ENCODE measurements at regions of chr6 and their contacts with region 1.

Region 1: DNA sequence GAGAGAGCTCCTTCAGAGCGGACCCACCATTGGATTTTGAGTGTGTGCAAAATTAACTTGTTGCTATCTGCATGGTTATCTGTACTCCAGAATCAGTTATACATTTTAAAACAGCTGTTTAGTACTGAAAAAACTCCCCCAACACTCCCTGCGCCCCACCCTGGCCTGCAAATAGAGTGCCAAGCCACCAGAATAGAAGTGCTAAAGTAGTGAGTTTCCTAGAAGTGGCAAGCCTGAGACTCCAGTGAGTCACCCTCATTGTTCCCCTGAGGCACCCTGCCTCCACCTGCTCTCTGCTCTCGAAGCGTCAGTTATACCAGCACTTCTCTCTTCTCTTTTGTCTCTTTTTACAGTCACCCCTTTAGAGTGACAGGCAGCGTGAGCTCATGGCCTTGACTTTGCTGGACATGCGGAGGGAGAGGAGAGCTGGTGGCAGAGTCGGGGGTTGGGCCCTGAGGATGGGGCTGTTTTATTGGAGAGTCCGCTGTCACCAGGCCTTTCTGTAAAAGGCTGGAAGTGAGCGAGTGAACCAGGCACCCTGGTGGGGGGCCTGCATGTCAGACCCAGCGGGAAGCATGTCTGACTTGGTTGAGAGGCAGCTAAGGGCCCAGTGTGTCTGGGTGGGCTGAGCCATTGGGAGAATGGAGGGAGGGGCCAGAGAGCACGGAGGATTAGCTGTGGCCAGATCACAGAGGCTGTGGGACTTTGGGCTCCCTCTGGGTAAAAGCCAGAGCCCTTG is 10.4 kb downstream of the IGF2R start:
- DNase-seq: peak; percentile 58
- H3K4me3 Mint-ChIP-seq: peak overlapping the region; percentile 86
- H3K27ac Mint-ChIP-seq: peak overlapping the region; percentile 97
- H3K4me1 Mint-ChIP-seq: peaks cover 89% of the 10 kb centered on the region
- H3K27me3 Mint-ChIP-seq: no peaks in the 10 kb centered on the region

Region 2: DNA sequence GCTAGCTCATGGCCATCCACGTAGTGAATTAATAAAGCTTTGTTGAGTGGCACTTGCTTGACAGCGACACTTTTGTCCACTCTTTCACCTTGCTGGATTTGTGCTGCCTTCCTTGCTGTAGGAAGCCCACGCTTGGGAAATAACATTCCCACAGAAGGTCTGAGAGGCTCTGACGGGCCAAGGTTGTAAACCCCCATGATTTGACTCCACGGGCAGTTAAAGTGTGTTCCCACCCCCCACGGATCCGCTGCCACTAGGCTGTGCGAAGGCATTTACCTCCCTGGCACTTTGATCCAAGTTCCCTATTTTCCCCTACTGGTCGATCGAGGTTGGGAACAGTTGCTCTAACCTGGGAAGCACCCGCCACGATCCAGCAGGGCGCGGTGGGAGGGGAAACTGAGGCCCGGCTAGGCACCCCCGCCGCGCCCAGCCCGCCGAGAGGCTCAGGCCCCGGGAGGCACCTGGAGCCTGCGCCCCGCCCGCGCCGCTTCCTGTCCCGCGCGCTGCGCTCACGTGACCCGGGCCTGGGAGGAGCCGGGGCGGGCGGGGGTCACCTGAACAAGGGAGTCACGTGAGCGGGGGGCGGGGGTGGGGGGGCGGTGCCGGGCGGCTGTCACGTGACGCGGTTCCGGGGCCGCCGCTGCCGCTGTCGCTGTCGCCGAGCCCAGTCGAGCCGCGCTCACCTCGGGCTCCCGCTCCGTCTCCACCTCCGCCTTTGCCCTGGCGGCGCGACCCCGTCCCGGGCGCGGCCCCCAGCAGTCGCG is 10.7 kb before region 1 on chr6 and contains the start of gene IGF2R:
- intact Hi-C with region 1: loop called (anchors 1 kb)
- DNase-seq: peak; percentile 90
- H3K4me3 Mint-ChIP-seq: peak within 1 kb of the TSS; percentile 96
- H3K27ac Mint-ChIP-seq: peak within 1 kb of the TSS; percentile 93
- H3K4me1 Mint-ChIP-seq: peaks cover 34% of the 10 kb centered on the region
- H3K27me3 Mint-ChIP-seq: peaks cover 17% of the 10 kb centered on the region
- total RNA-seq, gene IGF2R: 118 and 126 TPM in 2 replicates

Region 3: GRCh38 chr6:159989492-159990480 is 10.5 kb after region 1 on chr6:
- intact Hi-C with region 1: loop called (anchors 1 kb)
- DNase-seq: no peak
- H3K4me3 Mint-ChIP-seq: no peak overlapping the region
- H3K27ac Mint-ChIP-seq: peak overlapping the region; percentile 49
- H3K4me1 Mint-ChIP-seq: peaks cover 88% of the 10 kb centered on the region
- H3K27me3 Mint-ChIP-seq: no peaks in the 10 kb centered on the region

Measured in activated T-helper 1 cell treated with anti-CD3 and anti-CD28 coated beads, Interleukin-12 subunit alpha, Interleukin-12 subunit beta, Interleukin-2, Interleukin-4 antibody, amounts not matched to agents 30 ng/mL and 10 ng/mL and 1 ng/mL, durations not matched to agents 14 hours and 24 hours and 36 hours (primary cell).